Naive thymus-derived CD4-positive, alpha-beta T cell (primary cell): ENCODE measurements at regions of chr17 and their contacts with region 1.

Region 1: DNA sequence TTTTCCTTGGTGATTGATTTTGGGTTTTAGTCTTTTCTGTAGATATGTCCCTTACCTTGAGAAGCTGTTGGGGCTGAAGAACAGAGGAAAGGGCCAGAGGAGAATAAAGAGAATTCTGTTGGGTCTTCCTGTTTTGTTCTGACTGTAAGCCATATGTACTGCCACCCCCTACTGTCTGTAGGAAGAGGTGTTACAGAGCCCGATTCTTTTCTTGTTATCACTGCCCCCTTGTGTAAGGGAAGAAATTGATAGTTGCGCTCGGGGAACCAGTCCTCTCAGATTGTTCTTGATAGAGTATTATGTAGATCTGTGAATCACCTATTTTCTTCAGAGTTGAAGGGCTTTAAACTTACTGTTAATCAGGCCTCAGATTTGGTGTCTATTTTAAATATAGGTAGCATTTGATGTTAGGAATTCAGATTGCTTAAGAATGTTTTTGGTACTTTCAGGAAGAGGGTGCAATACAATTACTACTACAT is 2.4 kb downstream of the TANC2 start:
- DNase-seq: peak in 8 of 9 donors; percentile 30 to 81 (median 73)
- ATAC-seq: peak; percentile 63
- H3K4me3 ChIP-seq: no peak overlapping the region
- H3K4me3 Mint-ChIP-seq: peak overlapping the region; percentile 38 to 75 (median 64)
- H3K27ac ChIP-seq: no peak overlapping the region
- H3K27ac Mint-ChIP-seq: peak overlapping the region in 4 of 9 donors; percentile 14 to 65 (median 24)
- H3K4me1 ChIP-seq: peaks cover 14 to 15% of the 10 kb centered on the region in 2 donors
- H3K4me1 Mint-ChIP-seq: peaks cover 24 to 42% (median 30%) of the 10 kb centered on the region in 7 donors
- H3K27me3 ChIP-seq: no peaks in the 10 kb centered on the region
- H3K27me3 Mint-ChIP-seq: peaks cover 0 to 56% (median 0%) of the 10 kb centered on the region in 5 donors

Region 2: GRCh38 chr17:61139219-61139618 is 1829.3 kb before region 1 on chr17:
- CTCF ChIA-PET with region 1: no interaction called
- POLR2A ChIA-PET with region 1: no interaction called
- intact Hi-C with region 1: loop called in 1 of 2 experiments (anchors 10 kb)
- DNase-seq: peak; percentile 27 to 89 (median 80)
- ATAC-seq: peak; percentile 98
- H3K4me3 ChIP-seq: no peak overlapping the region
- H3K4me3 Mint-ChIP-seq: peak overlapping the region; percentile 24 to 81 (median 66)
- H3K27ac ChIP-seq: peak overlapping the region; percentile 7
- H3K27ac Mint-ChIP-seq: peak overlapping the region; percentile 28 to 86 (median 61)
- H3K4me1 ChIP-seq: peaks cover 14 to 29% of the 10 kb centered on the region in 2 donors
- H3K4me1 Mint-ChIP-seq: peaks cover 12 to 55% (median 44%) of the 10 kb centered on the region in 7 donors
- H3K27me3 ChIP-seq: no peaks in the 10 kb centered on the region
- H3K27me3 Mint-ChIP-seq: no peaks in the 10 kb centered on the region

Region 3: GRCh38 chr17:61927200-61928165 is 1041.0 kb before region 1 on chr17 and contains the start of gene INTS2:
- CTCF ChIA-PET with region 1: no interaction called
- POLR2A ChIA-PET with region 1: no interaction called
- intact Hi-C with region 1: loop called in 1 of 2 experiments (anchors 5 kb)
- DNase-seq: peak; percentile 90 to 96 (median 94)
- ATAC-seq: peak; percentile 95
- H3K4me3 ChIP-seq: peak within 1 kb of the TSS; percentile 98
- H3K4me3 Mint-ChIP-seq: peak within 1 kb of the TSS; percentile 88 to 96 (median 92)
- H3K27ac ChIP-seq: peak within 1 kb of the TSS; percentile 80
- H3K27ac Mint-ChIP-seq: peak within 1 kb of the TSS; percentile 90 to 98 (median 94)
- H3K4me1 ChIP-seq: peaks cover 11 to 19% of the 10 kb centered on the region in 2 donors
- H3K4me1 Mint-ChIP-seq: peaks cover 13 to 28% (median 21%) of the 10 kb centered on the region in 7 donors
- H3K27me3 ChIP-seq: no peaks in the 10 kb centered on the region
- H3K27me3 Mint-ChIP-seq: peaks cover 0 to 3% (median 0%) of the 10 kb centered on the region in 5 donors
- total RNA-seq, gene INTS2: 14.9 to 24.4 (median 19.2) TPM

Region 4: GRCh38 chr17:62653002-62653825 is 315.3 kb before region 1 on chr17:
- CTCF ChIA-PET with region 1: no interaction called
- POLR2A ChIA-PET with region 1: no interaction called
- intact Hi-C with region 1: loop called in 1 of 2 experiments (anchors 5 kb)
- DNase-seq: peak in 8 of 9 donors; percentile 14 to 94 (median 37)
- ATAC-seq: peak; percentile 83
- H3K4me3 ChIP-seq: peak overlapping the region; percentile 74
- H3K4me3 Mint-ChIP-seq: peak overlapping the region; percentile 71 to 95 (median 86)
- H3K27ac ChIP-seq: peak overlapping the region; percentile 32
- H3K27ac Mint-ChIP-seq: peak overlapping the region in 8 of 9 donors; percentile 2 to 86 (median 68)
- H3K4me1 ChIP-seq: peaks cover 8 to 12% of the 10 kb centered on the region in 2 donors
- H3K4me1 Mint-ChIP-seq: peaks cover 7 to 26% (median 21%) of the 10 kb centered on the region in 7 donors
- H3K27me3 ChIP-seq: no peaks in the 10 kb centered on the region
- H3K27me3 Mint-ChIP-seq: peaks cover 0 to 80% (median 0%) of the 10 kb centered on the region in 5 donors

Region 5: DNA sequence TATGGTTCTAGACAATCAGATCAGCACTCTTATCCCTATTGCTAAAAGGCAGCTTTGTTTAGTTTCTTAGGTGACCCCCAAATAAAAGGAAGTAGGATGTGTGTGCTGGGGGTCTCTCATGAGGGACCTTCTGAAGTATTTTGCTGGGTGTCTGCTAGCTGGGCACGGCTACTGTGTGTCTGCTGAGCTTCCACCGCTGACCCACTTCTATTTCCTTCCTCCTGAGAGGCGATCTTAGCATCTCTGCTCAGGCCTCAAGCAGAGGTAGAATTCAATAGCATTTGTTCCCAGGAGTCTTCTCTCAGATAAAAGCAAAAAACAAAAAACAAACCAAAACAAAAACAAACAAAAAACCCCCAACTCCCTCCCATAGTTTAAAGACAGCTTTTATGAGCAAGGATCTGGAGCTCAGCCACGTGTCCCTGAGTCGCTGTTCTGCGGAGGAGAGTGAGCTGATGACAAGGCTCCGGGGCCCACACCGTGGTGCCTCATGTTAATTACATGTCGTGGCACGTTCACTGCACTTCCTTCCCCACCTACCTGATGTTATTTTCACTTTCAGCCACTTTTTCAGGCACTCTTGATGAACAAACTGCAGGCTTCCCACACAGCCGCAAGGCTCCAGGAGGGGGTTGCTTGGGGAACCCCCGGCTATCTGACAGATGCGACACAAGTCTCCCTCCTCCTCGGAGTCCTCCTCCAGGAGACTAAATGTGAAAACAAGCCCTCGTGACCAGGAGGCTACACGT is 243.9 kb before region 1 on chr17:
- CTCF ChIA-PET with region 1: no interaction called
- POLR2A ChIA-PET with region 1: interaction called, 4 read pairs
- intact Hi-C with region 1: loop called (anchors 1 to 5 kb)
- DNase-seq: peak; percentile 20 to 75 (median 64)
- ATAC-seq: peak; percentile 94
- H3K4me3 ChIP-seq: peak overlapping the region; percentile 19
- H3K4me3 Mint-ChIP-seq: peak overlapping the region; percentile 51 to 89 (median 82)
- H3K27ac ChIP-seq: peak overlapping the region; percentile 41
- H3K27ac Mint-ChIP-seq: peak overlapping the region; percentile 75 to 99 (median 96)
- H3K4me1 ChIP-seq: peaks cover 9 to 19% of the 10 kb centered on the region in 2 donors
- H3K4me1 Mint-ChIP-seq: peaks cover 16 to 26% (median 20%) of the 10 kb centered on the region in 7 donors
- H3K27me3 ChIP-seq: no peaks in the 10 kb centered on the region
- H3K27me3 Mint-ChIP-seq: peaks cover 0 to 76% (median 5%) of the 10 kb centered on the region in 5 donors

Region 6: GRCh38 chr17:62902531-62903247 is 65.8 kb before region 1 on chr17:
- CTCF ChIA-PET with region 1: no interaction called
- POLR2A ChIA-PET with region 1: no interaction called
- intact Hi-C with region 1: no loop called
- DNase-seq: no peak
- ATAC-seq: no peak
- H3K4me3 ChIP-seq: no peak overlapping the region
- H3K4me3 Mint-ChIP-seq: no peak overlapping the region
- H3K27ac ChIP-seq: no peak overlapping the region
- H3K27ac Mint-ChIP-seq: no peak overlapping the region
- H3K4me1 ChIP-seq: no peaks in the 10 kb centered on the region
- H3K4me1 Mint-ChIP-seq: peaks cover 0 to 3% (median 0%) of the 10 kb centered on the region in 7 donors
- H3K27me3 ChIP-seq: no peaks in the 10 kb centered on the region
- H3K27me3 Mint-ChIP-seq: peaks cover 0 to 18% (median 7%) of the 10 kb centered on the region in 5 donors

Region 7: GRCh38 chr17:63549946-63550807 is 581.7 kb after region 1 on chr17 and contains the start of gene DCAF7:
- CTCF ChIA-PET with region 1: no interaction called
- POLR2A ChIA-PET with region 1: interaction called, 5 read pairs
- intact Hi-C with region 1: loop called in 1 of 2 experiments (anchors 2 kb)
- DNase-seq: peak; percentile 93 to 99 (median 99)
- ATAC-seq: peak; percentile 97
- H3K4me3 ChIP-seq: peak within 1 kb of the TSS; percentile 93
- H3K4me3 Mint-ChIP-seq: peak within 1 kb of the TSS; percentile 85 to 99 (median 98)
- H3K27ac ChIP-seq: peak within 1 kb of the TSS; percentile 90
- H3K27ac Mint-ChIP-seq: peak within 1 kb of the TSS; percentile 94 to 97 (median 96)
- H3K4me1 ChIP-seq: peaks cover 18 to 27% of the 10 kb centered on the region in 2 donors
- H3K4me1 Mint-ChIP-seq: peaks cover 32 to 50% (median 41%) of the 10 kb centered on the region in 7 donors
- H3K27me3 ChIP-seq: no peaks in the 10 kb centered on the region
- H3K27me3 Mint-ChIP-seq: peaks cover 0 to 2% (median 0%) of the 10 kb centered on the region in 5 donors
- total RNA-seq, gene DCAF7: 26.0 to 128 (median 70.0) TPM